ENCODE measurements at regions of chr11 and their contacts with region 1.

Region 1: GRCh38 chr11:114197799-114198500 is 98.2 kb upstream of the NNMT start:
- DNase-seq: peak; percentile 64
- H3K4me3 ChIP-seq: no peak overlapping the region
- H3K27ac ChIP-seq: peak overlapping the region; percentile 2 to 79 (median 72)
- H3K4me1 ChIP-seq: peaks cover 11 to 68% (median 44%) of the 10 kb centered on the region in 6 donors
- H3K27me3 ChIP-seq: no peaks in the 10 kb centered on the region
- CTCF ChIP-seq: peak in 1 of 11 experiments; percentile 4
- POLR2A ChIP-seq: no peak

Region 2: DNA sequence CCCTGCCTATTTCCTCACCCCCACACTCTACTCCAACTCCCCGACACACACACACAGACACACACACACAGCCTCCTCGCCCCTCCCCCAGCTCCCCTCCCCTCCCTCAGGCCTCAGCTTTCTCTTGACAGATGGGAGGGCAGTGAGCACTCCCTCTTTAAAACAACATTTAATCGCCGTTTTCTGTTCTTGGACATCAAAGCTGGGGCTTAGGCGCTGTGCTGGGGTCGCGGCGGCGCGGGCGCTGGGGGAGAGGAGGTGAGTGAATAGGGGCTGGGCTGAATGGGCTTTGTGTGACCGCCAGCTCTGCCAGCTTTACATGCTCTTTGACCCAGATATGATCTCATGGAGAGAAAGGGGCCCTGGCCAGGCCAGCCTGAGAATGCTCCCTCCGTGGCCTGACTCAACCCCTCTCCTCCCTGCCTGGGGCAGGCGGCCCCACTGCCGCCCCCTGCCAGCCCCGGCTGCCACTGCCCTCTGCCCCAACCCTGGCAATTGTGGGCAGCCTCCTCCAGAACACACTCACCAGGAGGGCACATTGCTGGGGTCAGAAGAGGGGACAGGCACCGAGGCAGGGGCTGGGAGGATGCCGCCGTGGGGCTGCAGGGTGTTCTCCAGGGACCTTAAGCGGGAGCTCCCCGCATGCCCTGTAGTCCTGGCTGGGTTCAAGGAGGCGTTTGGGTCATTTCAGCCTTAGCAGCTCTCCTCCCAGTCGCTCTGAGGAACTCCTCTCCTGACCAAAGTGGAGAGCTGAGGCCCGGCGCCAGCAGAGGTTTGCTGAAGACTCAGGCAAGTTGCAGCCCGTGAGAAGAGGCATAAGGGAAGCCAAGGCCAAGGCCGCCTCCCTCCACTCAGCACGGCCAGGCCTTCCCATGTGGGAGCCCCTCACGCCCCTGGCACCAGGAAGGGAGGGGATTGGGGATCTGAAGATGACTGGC is 59.9 kb after region 1 on chr11:
- intact Hi-C with region 1: loop called (anchors 10 kb)
- DNase-seq: peak; percentile 82
- H3K4me3 ChIP-seq: no peak overlapping the region
- H3K27ac ChIP-seq: peak overlapping the region in 6 of 8 donors; percentile 8 to 66 (median 55)
- H3K4me1 ChIP-seq: peaks cover 4 to 55% (median 36%) of the 10 kb centered on the region in 6 donors
- H3K27me3 ChIP-seq: peaks cover 0 to 7% (median 0%) of the 10 kb centered on the region in 7 donors
- CTCF ChIP-seq: peak in 2 of 11 experiments; percentile 9 to 22
- POLR2A ChIP-seq: no peak

Measured in spleen (tissue), 13 donors.